Transverse colon (tissue), 4 donors: ENCODE measurements at regions of chrX and their contacts with region 1.

Region 1: DNA sequence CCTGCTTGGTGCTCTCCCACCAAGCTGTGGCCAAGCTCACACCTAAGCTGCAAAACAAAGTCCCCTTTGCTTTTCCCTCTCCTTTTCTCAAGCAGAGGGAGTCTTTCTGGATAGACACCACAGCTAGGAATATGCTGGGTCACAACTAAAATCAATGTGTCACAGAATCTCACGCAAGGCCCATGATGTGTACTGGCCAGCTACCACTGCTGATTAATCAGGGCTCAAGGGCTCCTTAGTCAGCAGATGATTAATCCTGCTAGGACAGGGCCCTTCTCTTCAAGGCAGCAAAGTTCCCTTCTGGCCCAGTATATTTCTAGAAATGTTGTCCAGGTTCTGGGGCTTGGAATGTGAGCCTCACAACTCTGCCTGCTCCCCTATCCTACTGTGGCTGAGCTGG is 32.0 kb upstream of the TENT5D start:
- DNase-seq: no peak
- H3K4me3 ChIP-seq: no peak overlapping the region
- H3K27ac ChIP-seq: no peak overlapping the region
- H3K4me1 ChIP-seq: no peaks in the 10 kb centered on the region
- H3K27me3 ChIP-seq: no peaks in the 10 kb centered on the region
- CTCF ChIP-seq: no peak
- EP300 ChIP-seq: no peak
- POLR2A ChIP-seq: no peak

Region 2: GRCh38 chrX:80335062-80335830 is 53.0 kb before region 1 on chrX:
- in situ Hi-C with region 1: no loop called
- intact Hi-C with region 1: loop called (anchors 1 kb)
- DNase-seq: peak; percentile 64
- H3K4me3 ChIP-seq: peak overlapping the region; percentile 4 to 41 (median 22)
- H3K27ac ChIP-seq: peak overlapping the region in 1 of 4 donors; percentile 30
- H3K4me1 ChIP-seq: no peaks in the 10 kb centered on the region
- H3K27me3 ChIP-seq: no peaks in the 10 kb centered on the region
- CTCF ChIP-seq: no peak
- EP300 ChIP-seq: no peak
- POLR2A ChIP-seq: no peak

Region 3: DNA sequence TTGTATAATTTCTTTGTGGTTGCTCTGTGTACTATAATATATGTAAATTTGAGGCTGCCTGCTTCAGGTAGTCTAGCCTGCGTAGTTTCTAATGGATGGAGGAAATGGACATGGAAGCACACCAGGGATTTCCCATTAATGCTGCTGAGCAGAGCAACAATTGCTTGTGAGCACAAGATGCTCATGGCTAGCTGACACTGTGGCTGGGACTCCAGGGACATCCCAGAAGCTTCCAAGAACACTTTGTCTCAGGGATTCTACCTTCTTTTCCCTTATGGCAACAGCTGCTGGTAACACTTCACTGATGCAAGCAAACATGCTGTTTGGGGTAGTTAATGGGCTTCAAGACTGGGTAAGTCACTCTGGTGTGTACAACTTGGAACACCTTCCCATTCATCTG is 98.1 kb after region 1 on chrX:
- in situ Hi-C with region 1: no loop called
- intact Hi-C with region 1: no loop called
- DNase-seq: no peak
- H3K4me3 ChIP-seq: no peak overlapping the region
- H3K27ac ChIP-seq: no peak overlapping the region
- H3K4me1 ChIP-seq: no peaks in the 10 kb centered on the region
- H3K27me3 ChIP-seq: no peaks in the 10 kb centered on the region
- CTCF ChIP-seq: no peak
- EP300 ChIP-seq: no peak
- POLR2A ChIP-seq: no peak

Region 4: DNA sequence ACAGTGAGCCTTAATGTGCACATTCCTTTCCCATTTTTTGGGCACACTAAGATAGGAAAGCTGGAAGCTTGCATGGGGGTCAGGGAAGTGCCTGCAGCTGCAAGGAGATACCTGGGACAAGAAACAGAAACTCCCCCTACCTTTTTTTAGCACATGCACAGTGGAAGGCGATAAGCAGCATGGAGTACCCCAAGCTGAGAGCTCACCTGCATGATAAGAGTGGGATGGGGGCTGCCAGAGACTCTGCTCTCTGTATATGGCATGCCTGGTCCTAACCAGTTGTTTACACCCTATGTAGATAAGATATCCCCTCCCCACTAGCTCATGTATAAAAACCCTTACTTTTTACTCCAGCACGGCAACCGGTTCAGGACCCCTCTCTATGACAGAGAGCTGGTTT is 167.9 kb after region 1 on chrX:
- in situ Hi-C with region 1: no loop called
- intact Hi-C with region 1: no loop called
- DNase-seq: no peak
- H3K4me3 ChIP-seq: no peak overlapping the region
- H3K27ac ChIP-seq: no peak overlapping the region
- H3K4me1 ChIP-seq: no peaks in the 10 kb centered on the region
- H3K27me3 ChIP-seq: no peaks in the 10 kb centered on the region
- CTCF ChIP-seq: no peak
- EP300 ChIP-seq: no peak
- POLR2A ChIP-seq: no peak

Region 5: DNA sequence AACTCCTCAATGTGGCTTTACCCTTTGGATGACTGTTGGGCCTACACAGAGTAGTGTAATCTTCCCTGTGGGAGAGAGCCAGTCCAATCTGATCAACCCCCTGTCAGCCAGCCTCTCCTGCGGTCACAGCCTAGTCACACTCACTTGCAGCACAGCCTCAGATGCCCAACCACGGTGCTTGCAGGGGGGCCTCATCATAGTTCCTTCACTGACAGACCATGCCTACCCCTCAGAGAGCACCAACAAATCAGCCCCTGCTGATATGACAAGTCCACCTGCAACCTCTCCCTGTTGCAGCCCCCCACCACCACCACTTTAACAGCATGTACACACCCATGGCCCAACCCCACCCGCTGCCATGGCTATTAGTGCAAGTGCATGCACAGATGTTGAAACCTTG is 666.7 kb after region 1 on chrX:
- in situ Hi-C with region 1: no loop called
- intact Hi-C with region 1: no loop called
- DNase-seq: no peak
- H3K4me3 ChIP-seq: no peak overlapping the region
- H3K27ac ChIP-seq: no peak overlapping the region
- H3K4me1 ChIP-seq: no peaks in the 10 kb centered on the region
- H3K27me3 ChIP-seq: no peaks in the 10 kb centered on the region
- CTCF ChIP-seq: no peak
- EP300 ChIP-seq: no peak
- POLR2A ChIP-seq: no peak